ENCODE measurements at regions of chr1 and their contacts with region 1.

Region 1: DNA sequence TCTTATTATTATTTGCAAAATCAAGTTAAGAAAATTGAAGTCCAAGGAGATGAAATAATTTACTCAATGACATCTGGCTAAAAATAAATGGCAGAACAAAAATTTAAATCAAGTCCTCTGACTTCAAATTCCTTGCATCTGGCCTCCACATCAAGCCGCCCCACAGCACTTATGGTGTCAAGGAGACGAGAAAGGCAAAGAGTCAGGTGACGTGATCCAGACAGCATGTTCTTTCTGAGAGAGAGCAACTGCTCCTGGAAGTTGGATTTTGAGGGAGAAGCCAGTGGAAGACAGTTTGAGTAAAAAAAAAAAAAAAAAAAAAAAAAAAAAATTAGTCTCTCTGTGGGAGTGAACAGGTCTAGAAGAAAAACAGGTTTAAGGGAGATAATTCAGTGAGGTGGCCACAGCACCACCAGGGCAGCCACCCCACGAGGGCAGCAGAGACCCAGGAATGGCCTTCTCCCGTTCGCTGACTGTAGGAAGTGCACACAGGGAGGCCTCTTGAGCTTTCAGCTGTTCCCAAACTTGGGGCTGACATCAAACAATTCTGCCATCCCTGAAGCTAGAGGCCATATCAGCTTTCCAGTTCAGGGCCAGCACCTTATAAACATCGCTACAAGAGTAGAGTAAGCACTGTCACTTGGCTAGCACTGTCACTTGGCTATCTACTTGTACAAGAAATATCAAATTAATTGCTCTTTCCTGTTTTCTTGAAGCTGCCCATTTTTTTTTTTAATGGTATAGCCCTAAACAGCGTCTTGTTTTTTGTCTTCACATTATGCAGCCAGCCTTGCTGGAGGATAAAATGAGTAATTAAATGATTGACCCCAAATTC is 7.8 kb downstream of the C1orf162 start:
- DNase-seq: peak; percentile 79
- H3K4me3 ChIP-seq: no peak overlapping the region
- H3K27ac ChIP-seq: peak overlapping the region in 2 of 4 donors; percentile 19 to 33
- H3K4me1 ChIP-seq: peaks cover 0 to 11% (median 2%) of the 10 kb centered on the region in 4 donors
- H3K27me3 ChIP-seq: no peaks in the 10 kb centered on the region
- CTCF ChIP-seq: peak; percentile 63 to 85 (median 68)
- EP300 ChIP-seq: no peak
- POLR2A ChIP-seq: no peak

Region 2: DNA sequence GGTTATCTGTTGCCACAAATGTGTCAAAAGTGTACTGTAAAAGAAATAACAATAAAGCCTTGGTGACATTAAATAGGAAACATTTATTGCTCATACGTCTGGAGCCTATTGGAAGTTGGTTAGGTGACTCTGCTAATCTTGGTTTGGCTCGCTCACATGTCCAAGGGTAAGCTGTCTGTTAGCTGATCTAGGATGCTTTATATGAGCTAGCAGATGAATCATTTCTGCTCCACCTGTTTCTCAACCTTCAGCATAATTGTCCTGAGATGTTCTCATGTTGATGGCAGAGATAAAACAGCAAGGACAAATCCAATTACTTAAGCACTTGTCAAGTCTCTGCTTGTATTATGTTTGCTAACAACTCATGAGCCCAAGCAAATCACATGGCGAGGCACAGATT is 664.7 kb before region 1 on chr1:
- in situ Hi-C with region 1: no loop called
- intact Hi-C with region 1: no loop called
- DNase-seq: no peak
- H3K4me3 ChIP-seq: no peak overlapping the region
- H3K27ac ChIP-seq: no peak overlapping the region
- H3K4me1 ChIP-seq: no peaks in the 10 kb centered on the region
- H3K27me3 ChIP-seq: no peaks in the 10 kb centered on the region
- CTCF ChIP-seq: no peak
- EP300 ChIP-seq: no peak
- POLR2A ChIP-seq: no peak

Region 3: GRCh38 chr1:111541721-111542120 is 60.1 kb after region 1 on chr1:
- in situ Hi-C with region 1: no loop called
- intact Hi-C with region 1: no loop called
- DNase-seq: no peak
- H3K4me3 ChIP-seq: no peak overlapping the region
- H3K27ac ChIP-seq: peak overlapping the region; percentile 13 to 61 (median 39)
- H3K4me1 ChIP-seq: peaks cover 0 to 9% (median 4%) of the 10 kb centered on the region in 4 donors
- H3K27me3 ChIP-seq: no peaks in the 10 kb centered on the region
- CTCF ChIP-seq: no peak
- EP300 ChIP-seq: no peak
- POLR2A ChIP-seq: no peak

Region 4: GRCh38 chr1:111739194-111739924 is 257.8 kb after region 1 on chr1 and contains the start of gene INKA2:
- in situ Hi-C with region 1: loop called in 1 of 4 experiments (anchors 25 kb)
- intact Hi-C with region 1: no loop called
- DNase-seq: peak; percentile 91
- H3K4me3 ChIP-seq: peak within 1 kb of the TSS; percentile 47 to 73 (median 58)
- H3K27ac ChIP-seq: peak within 1 kb of the TSS; percentile 90 to 95 (median 94)
- H3K4me1 ChIP-seq: peaks cover 9 to 36% (median 29%) of the 10 kb centered on the region in 4 donors
- H3K27me3 ChIP-seq: peaks cover 23% of the 10 kb centered on the region
- CTCF ChIP-seq: peak in 1 of 5 experiments; percentile 5
- EP300 ChIP-seq: no peak
- POLR2A ChIP-seq: peak; percentile 77
- total RNA-seq, gene INKA2: 1.8 to 2.7 TPM in 2 of 4 donors, not detected in the others

Region 5: DNA sequence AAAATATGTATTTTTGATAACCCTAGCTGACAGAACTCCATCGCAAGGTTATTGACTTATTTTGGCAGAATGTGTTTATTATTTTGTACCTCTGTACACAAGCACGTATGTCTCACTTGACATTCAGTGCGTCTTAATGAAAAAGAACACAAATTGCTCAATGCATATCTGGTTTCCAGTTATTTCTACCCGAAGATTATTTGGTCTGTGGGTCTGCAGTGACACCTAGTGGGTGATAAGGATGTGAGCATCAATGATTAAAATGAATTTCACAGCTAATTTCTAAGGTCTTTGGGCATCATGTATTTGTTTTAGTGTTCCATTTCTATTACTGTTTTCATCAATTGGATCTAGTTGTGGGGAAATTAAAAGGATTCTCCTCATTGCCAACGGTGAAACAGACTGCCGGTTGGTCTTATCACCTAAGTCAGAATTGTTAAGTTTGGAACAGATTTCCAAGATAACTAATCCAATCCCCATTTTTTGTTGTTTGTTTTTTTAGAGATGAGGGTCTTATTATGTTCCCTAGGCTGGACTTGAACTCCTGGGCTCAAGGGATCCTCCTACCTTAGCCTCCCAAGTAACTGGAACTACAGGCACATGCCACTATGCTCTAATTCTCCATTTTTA is 288.0 kb after region 1 on chr1:
- in situ Hi-C with region 1: loop called in 1 of 4 experiments (anchors 10 kb)
- intact Hi-C with region 1: loop called (anchors 5 kb)
- DNase-seq: peak; percentile 26
- H3K4me3 ChIP-seq: no peak overlapping the region
- H3K27ac ChIP-seq: no peak overlapping the region
- H3K4me1 ChIP-seq: no peaks in the 10 kb centered on the region
- H3K27me3 ChIP-seq: no peaks in the 10 kb centered on the region
- CTCF ChIP-seq: peak; percentile 74 to 93 (median 79)
- EP300 ChIP-seq: no peak
- POLR2A ChIP-seq: no peak

Region 6: GRCh38 chr1:112369392-112370285 is 888.0 kb after region 1 on chr1:
- in situ Hi-C with region 1: loop called in 1 of 4 experiments (anchors 25 kb)
- intact Hi-C with region 1: no loop called
- DNase-seq: peak; percentile 91
- H3K4me3 ChIP-seq: no peak overlapping the region
- H3K27ac ChIP-seq: no peak overlapping the region
- H3K4me1 ChIP-seq: peaks cover 0 to 3% (median 0%) of the 10 kb centered on the region in 4 donors
- H3K27me3 ChIP-seq: peaks cover 18% of the 10 kb centered on the region
- CTCF ChIP-seq: peak; percentile 93 to 96 (median 95)
- EP300 ChIP-seq: no peak
- POLR2A ChIP-seq: no peak